ENCODE measurements at regions of chr1 and their contacts with region 1.

Region 1: DNA sequence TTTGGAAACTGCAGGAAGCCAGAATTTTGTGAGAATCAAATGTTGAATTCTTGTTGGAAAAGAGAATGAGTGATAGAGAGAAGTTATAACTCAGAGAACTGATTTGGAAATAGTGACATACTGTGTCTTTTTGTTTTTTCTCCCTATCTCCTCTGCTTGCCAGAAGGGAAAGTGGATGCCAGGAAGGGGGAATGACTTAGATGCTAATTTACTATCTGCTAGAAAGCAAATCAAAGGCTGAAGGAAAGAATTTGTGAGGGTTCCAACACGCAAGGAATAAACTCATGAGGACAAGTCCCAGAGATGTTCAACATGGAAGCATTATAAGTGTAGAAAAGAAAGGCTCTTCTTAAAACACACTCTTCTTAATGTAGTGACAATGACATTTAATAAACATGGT is 20.5 kb upstream of the LRRC39 start:
- DNase-seq: no peak
- H3K4me3 ChIP-seq: no peak overlapping the region
- H3K27ac ChIP-seq: no peak overlapping the region
- H3K27me3 ChIP-seq: no peaks in the 10 kb centered on the region
- CTCF ChIP-seq: no peak

Region 2: DNA sequence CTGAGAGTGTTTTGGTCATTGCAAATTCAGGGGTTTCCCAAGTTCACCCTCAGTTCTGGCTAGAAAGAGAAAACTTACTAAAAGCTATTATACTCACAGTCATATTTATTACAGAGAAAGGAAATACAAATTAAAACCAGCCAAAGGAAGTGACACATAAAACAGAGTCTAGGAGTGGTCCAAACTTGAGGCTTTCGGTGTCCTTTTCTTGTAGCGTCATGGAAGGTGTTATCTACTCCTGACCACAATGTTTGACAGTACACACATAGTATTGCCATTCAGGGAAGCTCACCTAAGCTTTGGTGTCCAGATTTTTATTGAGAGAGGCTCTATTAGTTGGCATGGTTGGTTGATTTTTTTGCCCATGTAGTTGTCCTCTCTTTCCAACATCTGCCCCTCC is 169.8 kb before region 1 on chr1:
- CTCF ChIA-PET with region 1: interaction called, 19 read pairs
- POLR2A ChIA-PET with region 1: no interaction called
- DNase-seq: no peak
- H3K4me3 ChIP-seq: no peak overlapping the region
- H3K27ac ChIP-seq: no peak overlapping the region
- H3K27me3 ChIP-seq: no peaks in the 10 kb centered on the region
- CTCF ChIP-seq: no peak

Measured in AG04450 (cell line).